MCF 10A (cell line): ENCODE measurements at regions of chr18 and their contacts with region 1.

Region 1: DNA sequence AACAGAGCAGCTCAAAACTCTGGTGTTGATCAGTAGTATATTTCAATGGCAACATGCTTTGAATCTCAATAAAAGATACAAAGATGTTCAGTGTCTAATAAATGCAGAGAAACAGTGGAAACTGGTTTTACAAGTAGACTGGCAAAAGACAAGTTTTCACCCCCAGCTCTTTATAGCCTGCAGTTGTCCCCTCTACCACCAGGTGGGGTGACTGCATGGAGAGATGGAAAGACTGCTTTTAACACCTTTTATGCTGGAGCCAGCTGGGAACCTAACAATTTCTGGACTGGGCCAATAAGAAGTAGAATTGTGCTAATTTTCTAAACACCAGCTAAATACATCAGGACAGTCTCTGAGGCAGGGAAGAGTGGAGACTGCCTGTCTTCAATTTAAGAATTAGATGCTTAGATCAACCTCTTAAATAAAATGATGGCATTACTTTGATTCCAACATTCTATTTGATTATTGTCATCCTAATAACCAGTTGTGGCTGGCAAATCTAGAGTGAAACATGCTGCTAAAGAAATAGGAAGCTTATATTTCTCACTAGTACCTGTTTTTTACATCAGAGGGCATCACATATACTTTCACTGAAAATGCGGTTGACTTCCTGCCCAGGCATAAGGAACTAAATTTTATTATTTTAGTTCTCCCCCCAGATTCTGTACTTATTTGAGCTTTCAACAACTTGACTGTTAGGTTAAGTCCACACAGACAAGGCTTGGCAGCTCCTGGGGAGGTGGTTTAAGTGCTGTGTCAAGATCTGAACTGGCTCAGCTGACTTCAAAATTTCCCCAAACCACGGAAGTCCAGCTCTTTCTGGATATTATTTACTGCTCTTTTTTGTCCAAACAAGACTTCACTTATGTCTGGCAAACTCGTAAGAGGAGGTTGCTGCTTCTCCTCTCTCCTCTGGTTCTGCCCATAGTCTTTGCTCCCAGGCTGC is 140.5 kb downstream of the TPGS2 start:
- DNase-seq: peak; percentile 75
- H3K4me3 Mint-ChIP-seq: no peak overlapping the region
- H3K27ac Mint-ChIP-seq: no peak overlapping the region
- H3K4me1 Mint-ChIP-seq: no peaks in the 10 kb centered on the region
- H3K27me3 Mint-ChIP-seq: no peaks in the 10 kb centered on the region
- CTCF ChIP-seq: peak; percentile 85

Region 2: DNA sequence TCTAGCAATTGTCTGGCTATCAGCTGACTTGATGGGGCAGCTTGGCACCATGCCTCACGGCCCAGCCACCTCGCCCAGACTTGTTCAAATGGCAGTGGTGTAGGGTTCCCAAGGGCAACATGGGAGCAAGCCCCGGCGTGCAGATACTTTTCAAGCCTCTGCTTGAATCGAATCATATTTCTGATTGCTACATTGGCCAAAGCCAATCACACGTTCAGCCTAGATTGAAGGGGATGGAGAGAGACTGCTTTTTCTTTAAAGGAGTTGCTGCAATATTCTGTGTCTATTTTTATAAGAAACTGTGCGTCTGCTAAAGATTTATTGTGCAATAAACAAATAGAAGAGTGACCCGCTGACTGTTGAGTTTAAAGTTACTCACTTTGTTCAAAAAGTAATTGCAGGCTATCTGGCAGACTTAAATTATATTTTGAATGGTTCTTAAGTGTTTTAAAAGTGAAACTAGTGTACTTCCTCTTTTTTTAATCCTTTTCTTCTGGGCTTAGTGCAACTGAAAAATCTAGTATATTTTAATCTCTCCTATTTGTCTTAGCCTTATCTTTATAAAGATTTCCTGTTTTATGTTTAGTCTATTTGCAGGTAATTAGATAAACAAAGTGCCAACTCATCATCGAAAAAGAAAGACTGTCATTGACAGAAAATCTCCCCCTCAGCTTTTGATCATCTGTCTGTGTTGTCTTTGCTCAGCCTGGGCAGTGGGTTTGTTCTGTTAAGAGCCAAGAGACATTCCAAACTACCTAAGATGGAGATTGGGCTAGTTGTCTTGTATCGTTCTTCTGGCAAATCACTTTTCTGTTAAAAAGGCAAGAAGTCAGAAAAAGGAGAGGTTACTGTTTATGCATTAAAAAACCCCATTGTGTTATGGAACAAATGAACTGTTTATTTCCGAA is 15.6 kb before region 1 on chr18:
- CTCF ChIA-PET with region 1: interaction called, 36 read pairs
- POLR2A ChIA-PET with region 1: interaction called, 8 read pairs
- intact Hi-C with region 1: no loop called
- DNase-seq: peak; percentile 98
- H3K4me3 Mint-ChIP-seq: peak overlapping the region; percentile 69
- H3K27ac Mint-ChIP-seq: peak overlapping the region; percentile 85
- H3K4me1 Mint-ChIP-seq: peaks cover 28% of the 10 kb centered on the region
- H3K27me3 Mint-ChIP-seq: no peaks in the 10 kb centered on the region
- CTCF ChIP-seq: no peak

Region 3: DNA sequence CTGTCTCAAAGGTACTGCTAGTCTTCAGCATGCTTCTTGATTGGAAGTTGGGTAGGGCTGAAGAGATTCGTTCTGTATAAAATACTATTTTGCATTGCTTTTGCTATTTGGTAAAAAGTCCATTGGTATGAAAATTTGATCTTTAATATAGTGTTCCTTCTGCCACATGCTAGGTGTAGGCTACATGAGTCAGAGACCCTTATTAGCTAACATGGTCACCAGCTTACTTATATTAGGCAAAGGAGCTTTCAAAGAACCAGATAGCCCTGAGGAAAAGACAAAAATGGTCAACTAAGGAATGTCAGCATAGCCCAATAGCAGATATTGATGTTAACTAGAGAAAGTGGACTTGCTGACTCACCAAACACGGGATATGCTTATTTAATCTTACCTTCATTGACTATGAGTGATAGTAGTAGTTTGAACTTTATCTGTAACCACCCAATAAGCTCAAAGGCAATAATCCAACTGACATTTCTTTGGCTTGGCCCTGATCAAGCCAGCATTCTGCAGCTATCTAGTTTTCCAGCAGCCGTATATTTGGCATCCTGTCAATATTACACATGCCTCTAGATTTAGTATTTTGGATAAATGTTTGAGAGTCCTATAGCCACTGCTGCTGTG is 30.5 kb after region 1 on chr18:
- CTCF ChIA-PET with region 1: interaction called, 16 read pairs
- POLR2A ChIA-PET with region 1: no interaction called
- intact Hi-C with region 1: no loop called
- DNase-seq: no peak
- H3K4me3 Mint-ChIP-seq: no peak overlapping the region
- H3K27ac Mint-ChIP-seq: no peak overlapping the region
- H3K4me1 Mint-ChIP-seq: no peaks in the 10 kb centered on the region
- H3K27me3 Mint-ChIP-seq: no peaks in the 10 kb centered on the region
- CTCF ChIP-seq: no peak

Region 4: GRCh38 chr18:36735130-36735529 is 46.8 kb after region 1 on chr18:
- CTCF ChIA-PET with region 1: interaction called, 17 read pairs
- POLR2A ChIA-PET with region 1: no interaction called
- intact Hi-C with region 1: no loop called
- DNase-seq: no peak
- H3K4me3 Mint-ChIP-seq: no peak overlapping the region
- H3K27ac Mint-ChIP-seq: no peak overlapping the region
- H3K4me1 Mint-ChIP-seq: no peaks in the 10 kb centered on the region
- H3K27me3 Mint-ChIP-seq: no peaks in the 10 kb centered on the region
- CTCF ChIP-seq: no peak

Region 5: GRCh38 chr18:36757081-36757480 is 68.8 kb after region 1 on chr18:
- CTCF ChIA-PET with region 1: interaction called, 135 read pairs
- POLR2A ChIA-PET with region 1: interaction called, 8 read pairs
- intact Hi-C with region 1: loop called (anchors 1 kb)
- DNase-seq: peak; percentile 70
- H3K4me3 Mint-ChIP-seq: no peak overlapping the region
- H3K27ac Mint-ChIP-seq: no peak overlapping the region
- H3K4me1 Mint-ChIP-seq: peaks cover 11% of the 10 kb centered on the region
- H3K27me3 Mint-ChIP-seq: no peaks in the 10 kb centered on the region
- CTCF ChIP-seq: peak; percentile 79

Region 6: DNA sequence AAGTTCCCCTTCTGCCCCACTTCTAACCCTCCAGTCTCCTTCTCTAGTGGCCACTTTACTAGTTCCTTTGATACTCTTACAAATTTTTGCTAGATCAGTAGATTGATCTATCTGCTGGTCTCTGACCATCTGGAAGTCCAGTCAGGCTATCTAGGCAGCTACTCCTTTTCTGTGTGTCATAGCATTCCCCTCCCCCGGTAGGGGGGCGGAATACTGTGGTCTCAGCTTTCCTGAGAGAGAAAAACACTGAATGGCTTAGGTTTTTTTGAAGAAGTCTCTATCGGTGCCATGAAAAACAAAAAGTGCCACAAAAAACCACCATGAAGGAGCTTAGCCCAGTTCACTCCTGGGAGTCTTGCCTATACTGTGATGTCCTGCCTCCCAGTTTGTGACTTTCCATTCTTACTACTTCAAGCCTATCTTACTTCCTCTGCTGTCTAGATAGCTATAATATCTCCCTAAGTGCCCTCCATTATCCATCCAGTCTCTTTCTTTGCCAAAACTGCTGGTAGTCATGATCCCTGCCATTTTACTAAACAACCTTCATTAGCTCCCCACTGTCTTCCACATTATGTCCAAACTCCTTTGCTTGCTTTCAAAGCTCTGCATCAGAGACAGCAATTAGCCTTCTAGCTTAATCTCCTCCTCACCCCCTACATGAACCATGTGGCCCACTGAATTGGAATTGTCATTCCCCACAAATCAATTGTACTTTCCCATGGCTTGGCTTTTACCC is 110.6 kb after region 1 on chr18:
- CTCF ChIA-PET with region 1: interaction called, 12 read pairs
- POLR2A ChIA-PET with region 1: no interaction called
- intact Hi-C with region 1: no loop called
- DNase-seq: no peak
- H3K4me3 Mint-ChIP-seq: no peak overlapping the region
- H3K27ac Mint-ChIP-seq: no peak overlapping the region
- H3K4me1 Mint-ChIP-seq: no peaks in the 10 kb centered on the region
- H3K27me3 Mint-ChIP-seq: no peaks in the 10 kb centered on the region
- CTCF ChIP-seq: no peak